ENCODE measurements at regions of chr1 and their contacts with region 1.

Region 1: DNA sequence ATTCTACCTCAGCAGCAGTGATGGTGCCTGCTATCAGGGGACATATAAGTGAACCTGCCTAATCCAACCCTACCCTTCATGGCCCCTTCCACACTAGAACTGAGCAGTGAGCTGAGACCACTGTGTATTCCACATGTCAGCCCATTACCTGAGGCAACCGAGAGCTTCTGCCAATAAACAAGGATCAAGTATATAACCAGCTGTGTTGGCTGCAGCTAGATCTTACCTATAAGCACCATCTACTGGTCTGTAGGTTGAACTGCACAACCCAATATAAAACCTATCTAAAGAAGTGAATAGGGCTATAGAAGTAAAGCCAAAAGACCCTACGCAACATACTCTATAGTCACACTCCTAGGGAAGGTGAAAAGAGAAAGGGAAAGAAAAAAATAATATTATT is 376.9 kb downstream of the HHIPL2 start:
- DNase-seq: peak; percentile 77
- ATAC-seq: peak; percentile 71
- H3K4me3 ChIP-seq: no peak overlapping the region
- H3K27ac ChIP-seq: no peak overlapping the region
- H3K4me1 ChIP-seq: no peaks in the 10 kb centered on the region
- H3K27me3 ChIP-seq: no peaks in the 10 kb centered on the region
- CTCF ChIP-seq: peak; percentile 90

Region 2: GRCh38 chr1:221543529-221544120 is 627.4 kb before region 1 on chr1:
- CTCF ChIA-PET with region 1: no interaction called
- POLR2A ChIA-PET with region 1: no interaction called
- intact Hi-C with region 1: loop called (anchors 2 kb)
- DNase-seq: peak; percentile 60
- ATAC-seq: peak; percentile 48; the same call in 1 of the 2 replicates
- H3K4me3 ChIP-seq: no peak overlapping the region
- H3K27ac ChIP-seq: no peak overlapping the region
- H3K4me1 ChIP-seq: peaks cover 5% of the 10 kb centered on the region; the same call in 1 of the 2 replicates
- H3K27me3 ChIP-seq: no peaks in the 10 kb centered on the region
- CTCF ChIP-seq: peak; percentile 87

Region 3: GRCh38 chr1:221987860-221988520 is 183.0 kb before region 1 on chr1:
- CTCF ChIA-PET with region 1: no interaction called
- POLR2A ChIA-PET with region 1: no interaction called
- intact Hi-C with region 1: loop called (anchors 5 kb)
- DNase-seq: peak; percentile 95
- ATAC-seq: peak; percentile 67
- H3K4me3 ChIP-seq: no peak overlapping the region
- H3K27ac ChIP-seq: peak overlapping the region; percentile 32
- H3K4me1 ChIP-seq: peaks cover 36% of the 10 kb centered on the region
- H3K27me3 ChIP-seq: no peaks in the 10 kb centered on the region
- CTCF ChIP-seq: no peak

Region 4: GRCh38 chr1:222009105-222009730 is 161.8 kb before region 1 on chr1:
- CTCF ChIA-PET with region 1: no interaction called
- POLR2A ChIA-PET with region 1: interaction called, 3 read pairs
- intact Hi-C with region 1: loop called (anchors 1 kb)
- DNase-seq: peak; percentile 78
- ATAC-seq: peak; percentile 88
- H3K4me3 ChIP-seq: no peak overlapping the region
- H3K27ac ChIP-seq: no peak overlapping the region
- H3K4me1 ChIP-seq: peaks cover 12% of the 10 kb centered on the region; the same call in 1 of the 2 replicates
- H3K27me3 ChIP-seq: no peaks in the 10 kb centered on the region
- CTCF ChIP-seq: peak; percentile 94

Region 5: DNA sequence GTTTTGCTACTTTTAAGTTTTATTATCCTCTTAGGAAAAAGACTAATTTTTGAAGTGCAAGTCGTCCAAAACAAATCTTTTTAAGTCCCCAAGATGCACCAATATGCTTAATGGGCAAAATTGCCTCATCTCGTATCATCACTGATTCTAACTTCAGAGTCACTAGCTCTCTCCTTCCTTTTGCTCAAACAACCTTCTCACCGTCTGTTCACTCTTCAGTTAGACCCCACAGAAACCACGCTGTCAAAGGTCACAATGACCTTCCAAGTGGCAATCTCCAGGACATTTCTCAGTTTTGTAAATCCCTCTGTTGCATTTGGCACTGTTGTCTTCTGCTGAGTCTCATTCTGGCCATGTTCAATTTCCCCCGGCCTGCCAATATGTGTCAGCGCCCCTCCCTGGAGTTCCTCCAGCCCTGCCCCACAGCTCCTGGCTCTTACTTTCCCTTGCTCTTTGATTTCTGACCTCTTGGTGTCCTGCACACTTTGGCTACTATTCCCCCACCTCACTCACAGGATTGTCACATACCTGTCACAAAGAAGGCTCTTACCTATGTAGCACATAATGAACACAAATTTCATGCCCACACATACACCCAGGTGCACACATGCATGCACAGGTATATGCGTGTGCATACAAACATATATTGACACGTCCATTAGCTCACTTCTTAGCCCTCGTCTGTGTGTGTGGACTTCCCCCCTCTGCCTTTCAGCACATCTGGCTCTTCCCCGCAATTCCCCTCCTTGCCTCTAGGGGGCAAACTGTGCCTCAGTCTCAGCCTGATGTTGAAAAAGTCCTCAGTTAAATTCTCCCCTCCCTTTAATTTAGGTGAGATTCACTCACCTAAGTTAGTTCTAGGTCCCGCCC is 75.2 kb before region 1 on chr1:
- CTCF ChIA-PET with region 1: no interaction called
- POLR2A ChIA-PET with region 1: no interaction called
- intact Hi-C with region 1: loop called (anchors 1 kb)
- DNase-seq: peak; percentile 77
- ATAC-seq: peak; percentile 71
- H3K4me3 ChIP-seq: no peak overlapping the region
- H3K27ac ChIP-seq: no peak overlapping the region
- H3K4me1 ChIP-seq: peaks cover 5% of the 10 kb centered on the region; the same call in 1 of the 2 replicates
- H3K27me3 ChIP-seq: no peaks in the 10 kb centered on the region
- CTCF ChIP-seq: peak; percentile 98

Region 6: DNA sequence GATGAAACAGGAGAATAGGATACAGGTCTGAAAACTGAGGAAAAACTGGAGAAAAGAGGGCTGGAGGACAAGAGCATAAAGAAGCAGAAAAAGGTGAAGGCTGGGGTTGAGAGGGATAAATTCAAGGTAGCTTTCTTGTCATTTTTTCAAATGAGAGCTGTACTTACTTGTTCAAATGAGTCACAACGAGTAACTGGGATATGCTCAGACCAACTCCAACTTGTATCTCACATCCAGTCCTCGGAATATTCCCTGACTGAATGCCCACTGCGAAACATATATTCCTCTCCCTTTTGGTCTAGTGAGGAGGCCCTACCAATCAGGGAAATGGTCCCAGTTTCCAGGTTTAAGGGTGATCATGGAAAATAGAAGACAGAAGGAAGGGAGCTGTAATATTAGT is 33.5 kb after region 1 on chr1:
- CTCF ChIA-PET with region 1: no interaction called
- POLR2A ChIA-PET with region 1: no interaction called
- intact Hi-C with region 1: no loop called
- DNase-seq: no peak
- ATAC-seq: no peak
- H3K4me3 ChIP-seq: no peak overlapping the region
- H3K27ac ChIP-seq: no peak overlapping the region
- H3K4me1 ChIP-seq: no peaks in the 10 kb centered on the region
- H3K27me3 ChIP-seq: 0 out of 2 replicates have a peak, but pooled peaks cover 3% of the 10 kb centered on the region
- CTCF ChIP-seq: no peak

Region 7: GRCh38 chr1:222224636-222225315 is 53.8 kb after region 1 on chr1:
- CTCF ChIA-PET with region 1: no interaction called
- POLR2A ChIA-PET with region 1: no interaction called
- intact Hi-C with region 1: no loop called
- DNase-seq: peak; percentile 21
- ATAC-seq: no peak
- H3K4me3 ChIP-seq: no peak overlapping the region
- H3K27ac ChIP-seq: no peak overlapping the region
- H3K4me1 ChIP-seq: peaks cover 14% of the 10 kb centered on the region
- H3K27me3 ChIP-seq: 0 out of 2 replicates have a peak, but pooled peaks cover under 1% of the 10 kb centered on the region
- CTCF ChIP-seq: no peak

Measured in PC-3 (cell line).